ENCODE measurements at regions of chr2 and their contacts with region 1.

Region 1: GRCh38 chr2:134918526-134919340 is at the start of gene CCNT2:
- DNase-seq: peak; percentile 100
- ATAC-seq: peak; percentile 89
- H3K4me3 Mint-ChIP-seq: peak within 1 kb of the TSS; percentile 92
- H3K27ac Mint-ChIP-seq: peak within 1 kb of the TSS; percentile 98
- H3K4me1 Mint-ChIP-seq: peaks cover 27% of the 10 kb centered on the region
- H3K27me3 Mint-ChIP-seq: no peaks in the 10 kb centered on the region
- total RNA-seq, gene CCNT2: 29.3 to 36.6 TPM

Region 2: GRCh38 chr2:134056173-134056572 is 862.6 kb before region 1 on chr2:
- CTCF ChIA-PET with region 1: no interaction called
- POLR2A ChIA-PET with region 1: no interaction called
- intact Hi-C with region 1: no loop called
- DNase-seq: no peak
- ATAC-seq: no peak
- H3K4me3 Mint-ChIP-seq: no peak overlapping the region
- H3K27ac Mint-ChIP-seq: no peak overlapping the region
- H3K4me1 Mint-ChIP-seq: peaks cover 5% of the 10 kb centered on the region
- H3K27me3 Mint-ChIP-seq: peaks cover 12% of the 10 kb centered on the region

Region 3: GRCh38 chr2:134261398-134262131 is 657.2 kb before region 1 on chr2:
- CTCF ChIA-PET with region 1: no interaction called
- POLR2A ChIA-PET with region 1: no interaction called
- intact Hi-C with region 1: loop called in 1 of 2 experiments (anchors 10 kb)
- DNase-seq: peak; percentile 34
- ATAC-seq: peak; percentile 70
- H3K4me3 Mint-ChIP-seq: no peak overlapping the region
- H3K27ac Mint-ChIP-seq: no peak overlapping the region
- H3K4me1 Mint-ChIP-seq: peaks cover 67% of the 10 kb centered on the region
- H3K27me3 Mint-ChIP-seq: no peaks in the 10 kb centered on the region

Region 4: GRCh38 chr2:134668821-134669220 is 249.9 kb before region 1 on chr2:
- CTCF ChIA-PET with region 1: no interaction called
- POLR2A ChIA-PET with region 1: no interaction called
- intact Hi-C with region 1: loop called in 1 of 2 experiments (anchors 5 kb)
- DNase-seq: peak; percentile 89
- ATAC-seq: peak; percentile 92
- H3K4me3 Mint-ChIP-seq: no peak overlapping the region
- H3K27ac Mint-ChIP-seq: peak overlapping the region; percentile 32
- H3K4me1 Mint-ChIP-seq: peaks cover 67% of the 10 kb centered on the region
- H3K27me3 Mint-ChIP-seq: peaks cover 9% of the 10 kb centered on the region

Region 5: GRCh38 chr2:135124924-135125886 is 206.5 kb after region 1 on chr2:
- CTCF ChIA-PET with region 1: no interaction called
- POLR2A ChIA-PET with region 1: no interaction called
- intact Hi-C with region 1: no loop called
- DNase-seq: no peak
- ATAC-seq: peak; percentile 91
- H3K4me3 Mint-ChIP-seq: no peak overlapping the region
- H3K27ac Mint-ChIP-seq: peak overlapping the region; percentile 85
- H3K4me1 Mint-ChIP-seq: peaks cover 3% of the 10 kb centered on the region
- H3K27me3 Mint-ChIP-seq: no peaks in the 10 kb centered on the region

Region 6: DNA sequence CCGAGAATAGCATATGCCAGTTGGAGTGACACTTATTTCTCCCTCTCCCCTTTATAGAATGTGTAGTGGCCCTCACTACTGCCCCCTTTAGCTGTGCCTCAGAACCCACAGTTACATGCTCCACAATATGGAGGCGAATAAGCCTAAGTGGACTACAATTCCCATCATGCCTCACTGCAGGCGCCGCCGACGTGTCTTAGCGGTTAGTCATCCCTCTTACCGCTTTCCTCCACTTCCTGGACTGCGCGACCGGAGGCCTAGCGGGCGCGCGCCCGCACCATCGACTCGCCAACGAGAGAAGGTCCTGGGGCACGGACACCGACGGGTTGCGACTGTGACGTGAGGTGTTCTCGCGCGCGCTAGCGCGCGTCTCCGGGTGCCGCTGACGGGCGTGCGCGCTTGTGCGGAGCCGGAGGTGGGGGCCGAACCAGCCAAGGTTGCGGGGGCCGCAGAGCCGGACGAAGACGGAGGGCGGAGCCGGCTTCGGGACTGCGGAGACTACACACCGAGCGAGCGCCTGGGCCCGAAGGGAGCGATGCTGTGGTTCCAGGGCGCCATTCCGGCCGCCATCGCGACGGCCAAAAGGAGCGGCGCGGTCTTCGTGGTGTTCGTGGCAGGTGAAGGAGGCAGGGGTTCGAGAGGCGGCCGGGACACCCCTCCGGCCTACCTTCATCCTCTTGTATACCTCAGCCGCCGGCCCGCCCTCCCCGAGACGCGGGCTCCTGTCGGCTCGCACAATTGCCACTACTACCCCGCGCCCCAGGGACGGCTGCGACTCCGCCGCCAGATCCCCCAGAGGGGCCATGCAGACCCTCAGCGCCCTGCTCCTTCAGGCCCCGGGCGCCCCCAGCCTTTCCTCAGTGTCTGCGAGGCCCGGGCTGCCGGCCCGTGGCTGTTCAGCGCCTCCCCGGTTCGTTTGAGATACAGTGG is 822.9 kb after region 1 on chr2 and contains the start of gene UBXN4:
- CTCF ChIA-PET with region 1: interaction called, 3 read pairs
- POLR2A ChIA-PET with region 1: no interaction called
- intact Hi-C with region 1: loop called (anchors 1 to 2 kb)
- DNase-seq: peak; percentile 98
- ATAC-seq: peak; percentile 93
- H3K4me3 Mint-ChIP-seq: peak within 1 kb of the TSS; percentile 97
- H3K27ac Mint-ChIP-seq: peak within 1 kb of the TSS; percentile 99
- H3K4me1 Mint-ChIP-seq: peaks cover 35% of the 10 kb centered on the region
- H3K27me3 Mint-ChIP-seq: no peaks in the 10 kb centered on the region
- total RNA-seq, gene UBXN4: 97.0 to 104 TPM

Region 7: GRCh38 chr2:136098441-136098840 is 1179.7 kb after region 1 on chr2:
- CTCF ChIA-PET with region 1: no interaction called
- POLR2A ChIA-PET with region 1: no interaction called
- intact Hi-C with region 1: no loop called
- DNase-seq: no peak
- ATAC-seq: no peak
- H3K4me3 Mint-ChIP-seq: no peak overlapping the region
- H3K27ac Mint-ChIP-seq: no peak overlapping the region
- H3K4me1 Mint-ChIP-seq: peaks cover 4% of the 10 kb centered on the region
- H3K27me3 Mint-ChIP-seq: no peaks in the 10 kb centered on the region